Natural killer cell (primary cell): ENCODE measurements at regions of chr11 and their contacts with region 1.

Region 1: DNA sequence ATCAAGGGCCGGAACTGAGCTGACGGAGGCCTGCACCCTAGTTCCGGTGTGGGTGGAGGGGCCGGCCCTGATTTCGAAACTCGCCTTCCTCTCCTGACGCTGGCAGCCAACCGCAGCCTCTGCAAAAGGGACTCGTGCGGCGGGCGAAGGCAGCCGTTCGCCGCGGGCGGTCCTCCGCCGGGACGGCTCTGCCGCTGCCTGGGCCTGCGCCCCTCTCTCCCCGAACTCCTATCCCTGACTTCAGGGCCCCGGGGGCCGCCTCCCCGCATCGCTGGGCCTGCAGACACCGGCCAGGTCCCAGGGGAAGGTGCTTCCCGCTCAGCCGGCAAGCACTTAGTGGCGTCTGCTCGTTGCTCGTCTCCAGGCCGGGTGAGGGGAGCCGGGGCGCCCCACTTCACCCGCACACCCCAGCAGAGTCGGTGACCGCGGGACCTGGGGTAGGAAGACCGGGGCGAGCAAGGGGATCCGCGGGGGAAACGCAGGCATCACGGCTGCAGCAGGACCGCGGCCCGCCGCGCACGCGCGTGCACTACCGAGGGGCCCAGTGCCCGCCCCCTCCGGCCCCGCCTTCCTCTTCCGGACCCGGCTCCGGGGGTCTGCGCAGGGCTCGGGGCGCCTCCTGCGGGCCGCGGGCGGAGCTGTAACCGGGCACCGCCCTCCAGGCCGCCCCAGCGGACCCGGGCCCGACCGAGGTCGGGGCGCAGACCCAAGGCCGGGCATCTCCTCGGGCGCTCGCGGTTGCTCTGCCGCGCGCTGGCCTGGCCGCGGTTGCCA is 464 bp upstream of the ANKRD13D start:
- DNase-seq: peak; percentile 91 to 94
- ATAC-seq: peak; percentile 68 to 87 (median 73)
- H3K4me3 ChIP-seq: peak overlapping the region; percentile 95
- H3K4me3 Mint-ChIP-seq: peak overlapping the region; percentile 89
- H3K27ac ChIP-seq: peak overlapping the region; percentile 97
- H3K27ac Mint-ChIP-seq: peak overlapping the region; percentile 100
- H3K4me1 ChIP-seq: peaks cover 78% of the 10 kb centered on the region
- H3K4me1 Mint-ChIP-seq: peaks cover 46 to 60% of the 10 kb centered on the region in 2 donors
- H3K27me3 ChIP-seq: no peaks in the 10 kb centered on the region
- H3K27me3 Mint-ChIP-seq: no peaks in the 10 kb centered on the region
- CTCF ChIP-seq: peak; percentile 10

Region 2: GRCh38 chr11:67033661-67034166 is 254.9 kb before region 1 on chr11:
- intact Hi-C with region 1: no loop called
- DNase-seq: no peak
- ATAC-seq: no peak
- H3K4me3 ChIP-seq: no peak overlapping the region
- H3K4me3 Mint-ChIP-seq: no peak overlapping the region
- H3K27ac ChIP-seq: no peak overlapping the region
- H3K27ac Mint-ChIP-seq: no peak overlapping the region
- H3K4me1 ChIP-seq: no peaks in the 10 kb centered on the region
- H3K4me1 Mint-ChIP-seq: no peaks in the 10 kb centered on the region
- H3K27me3 ChIP-seq: no peaks in the 10 kb centered on the region
- H3K27me3 Mint-ChIP-seq: peaks cover 8 to 19% of the 10 kb centered on the region in 2 donors
- CTCF ChIP-seq: no peak

Region 3: GRCh38 chr11:67071420-67072284 is 217.0 kb before region 1 on chr11:
- intact Hi-C with region 1: no loop called
- DNase-seq: peak; percentile 68 to 82
- ATAC-seq: peak; percentile 90 to 99 (median 98)
- H3K4me3 ChIP-seq: peak overlapping the region; percentile 5
- H3K4me3 Mint-ChIP-seq: peak overlapping the region; percentile 74
- H3K27ac ChIP-seq: no peak overlapping the region
- H3K27ac Mint-ChIP-seq: no peak overlapping the region
- H3K4me1 ChIP-seq: peaks cover 9% of the 10 kb centered on the region
- H3K4me1 Mint-ChIP-seq: peaks cover 0 to 7% of the 10 kb centered on the region in 2 donors
- H3K27me3 ChIP-seq: peaks cover 3% of the 10 kb centered on the region
- H3K27me3 Mint-ChIP-seq: peaks cover 0 to 2% of the 10 kb centered on the region in 2 donors
- CTCF ChIP-seq: peak; percentile 87

Region 4: DNA sequence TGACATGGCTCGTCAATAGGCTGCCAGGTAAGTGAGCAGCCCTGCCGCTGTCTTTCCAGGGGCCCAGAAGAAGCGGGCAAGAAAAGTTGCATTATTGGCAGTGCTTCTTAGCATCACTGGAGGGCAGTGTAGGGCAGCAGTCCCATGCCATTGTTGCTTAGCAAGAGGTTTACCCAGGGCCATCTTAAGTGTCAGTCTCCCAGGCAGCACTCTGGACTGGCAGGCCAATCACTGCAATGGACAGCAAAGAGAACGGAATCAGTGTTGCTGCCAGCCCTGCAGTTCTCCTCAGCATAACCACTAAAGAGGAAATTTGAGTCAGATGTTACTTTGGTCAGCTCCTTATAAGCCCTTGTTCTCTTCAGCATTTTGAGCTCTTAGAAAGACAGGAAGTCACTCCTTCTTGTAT is 35.8 kb before region 1 on chr11:
- intact Hi-C with region 1: loop called (anchors 5 kb)
- DNase-seq: peak in 1 of 2 donors; percentile 70
- ATAC-seq: peak; percentile 78 to 86 (median 79)
- H3K4me3 ChIP-seq: no peak overlapping the region
- H3K4me3 Mint-ChIP-seq: peak overlapping the region; percentile 57
- H3K27ac ChIP-seq: peak overlapping the region; percentile 7
- H3K27ac Mint-ChIP-seq: peak overlapping the region; percentile 78 to 89
- H3K4me1 ChIP-seq: peaks cover 18% of the 10 kb centered on the region
- H3K4me1 Mint-ChIP-seq: peaks cover 36 to 41% of the 10 kb centered on the region in 2 donors
- H3K27me3 ChIP-seq: no peaks in the 10 kb centered on the region
- H3K27me3 Mint-ChIP-seq: no peaks in the 10 kb centered on the region
- CTCF ChIP-seq: peak; percentile 53

Region 5: DNA sequence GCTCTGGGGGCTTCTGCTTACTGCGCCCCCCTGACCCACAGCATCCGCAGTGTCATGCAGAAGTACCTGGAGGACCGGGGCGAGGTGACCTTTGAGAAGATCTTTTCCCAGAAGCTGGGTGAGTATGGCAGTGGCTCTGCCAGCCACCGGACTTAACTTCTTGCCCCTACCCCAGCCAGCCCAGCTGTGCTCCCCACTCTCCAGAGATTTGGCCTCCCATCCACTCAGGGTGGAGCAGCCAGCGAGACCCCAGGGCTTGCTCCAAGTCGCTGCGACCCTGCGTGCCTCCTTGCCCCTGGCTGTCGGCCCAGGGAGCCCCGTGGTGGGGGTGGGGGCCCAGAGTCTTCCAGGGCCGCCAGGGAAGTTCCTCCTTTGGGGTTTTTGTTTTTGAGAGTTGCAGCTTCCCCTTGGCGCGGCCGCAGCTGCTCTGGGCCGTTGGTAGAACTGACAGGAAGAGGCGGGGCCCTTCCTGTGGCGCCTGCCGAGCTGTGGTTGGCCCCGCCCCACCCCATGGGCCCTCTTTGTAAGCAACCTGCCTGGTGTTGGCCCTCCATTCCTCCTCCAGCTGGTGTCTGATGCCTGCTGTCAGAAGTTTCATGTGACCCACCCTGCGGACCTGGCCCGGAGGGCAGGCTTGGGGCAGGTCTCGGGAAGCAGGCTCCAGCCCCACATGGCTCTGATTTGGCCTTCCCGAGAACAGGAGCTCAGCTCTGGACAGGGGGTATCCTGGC is 11.2 kb before region 1 on chr11:
- intact Hi-C with region 1: loop called (anchors 1 kb)
- DNase-seq: peak; percentile 84 to 97
- ATAC-seq: peak; percentile 90 to 95 (median 91)
- H3K4me3 ChIP-seq: peak overlapping the region; percentile 37
- H3K4me3 Mint-ChIP-seq: peak overlapping the region; percentile 80
- H3K27ac ChIP-seq: peak overlapping the region; percentile 95
- H3K27ac Mint-ChIP-seq: peak overlapping the region; percentile 96 to 97
- H3K4me1 ChIP-seq: peaks cover 100% of the 10 kb centered on the region
- H3K4me1 Mint-ChIP-seq: peaks cover 58 to 65% of the 10 kb centered on the region in 2 donors
- H3K27me3 ChIP-seq: no peaks in the 10 kb centered on the region
- H3K27me3 Mint-ChIP-seq: no peaks in the 10 kb centered on the region
- CTCF ChIP-seq: no peak

Region 6: GRCh38 chr11:67303132-67303834 is 14.6 kb after region 1 on chr11 and contains the start of gene SSH3:
- intact Hi-C with region 1: loop called (anchors 2 kb)
- DNase-seq: peak; percentile 52 to 60
- ATAC-seq: peak; percentile 81 to 87 (median 86)
- H3K4me3 ChIP-seq: peak within 1 kb of the TSS; percentile 50
- H3K4me3 Mint-ChIP-seq: peak within 1 kb of the TSS; percentile 79
- H3K27ac ChIP-seq: peak within 1 kb of the TSS; percentile 43
- H3K27ac Mint-ChIP-seq: peak within 1 kb of the TSS; percentile 54 to 82
- H3K4me1 ChIP-seq: peaks cover 25% of the 10 kb centered on the region
- H3K4me1 Mint-ChIP-seq: peaks cover 11 to 23% of the 10 kb centered on the region in 2 donors
- H3K27me3 ChIP-seq: no peaks in the 10 kb centered on the region
- H3K27me3 Mint-ChIP-seq: no peaks in the 10 kb centered on the region
- CTCF ChIP-seq: no peak
- total RNA-seq, gene SSH3: 34.3 to 42.7 (median 38.1) TPM

Region 7: DNA sequence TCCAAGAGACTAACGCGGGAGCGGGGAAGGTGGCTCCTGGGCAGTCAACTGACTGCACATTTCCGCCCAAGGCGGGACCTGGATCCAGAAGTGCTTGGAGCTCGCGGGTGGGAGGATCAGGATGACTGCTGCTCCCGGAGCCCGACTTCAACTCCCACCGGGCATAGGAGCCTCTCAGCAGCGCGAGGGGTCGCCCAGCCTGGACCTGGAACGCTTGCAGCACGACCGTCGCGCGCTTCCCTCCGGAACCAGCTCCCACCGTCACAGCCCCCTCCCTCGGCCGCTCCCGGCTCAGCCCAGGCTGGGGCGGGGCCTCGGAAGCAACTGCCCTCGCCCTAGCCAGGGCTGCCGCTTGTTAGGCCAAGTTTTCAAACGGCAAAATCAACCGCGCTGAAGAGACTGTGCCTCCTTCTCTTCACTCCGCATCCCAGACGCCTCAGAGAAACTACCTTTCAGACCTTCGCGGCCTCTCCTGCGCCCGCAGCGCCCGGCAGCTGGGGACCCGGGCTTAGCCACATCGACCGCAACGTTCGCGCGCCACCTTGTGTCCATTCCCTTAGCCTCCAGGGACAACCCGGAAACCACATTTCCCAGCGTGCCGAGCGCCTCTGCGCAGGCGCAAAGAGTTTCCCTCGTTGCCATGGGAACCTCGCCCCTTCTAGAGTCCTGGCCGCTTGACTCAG is 28.7 kb after region 1 on chr11:
- intact Hi-C with region 1: loop called (anchors 2 kb)
- DNase-seq: peak; percentile 98 to 99
- ATAC-seq: peak; percentile 88 to 94 (median 90)
- H3K4me3 ChIP-seq: peak overlapping the region; percentile 61
- H3K4me3 Mint-ChIP-seq: peak overlapping the region; percentile 100
- H3K27ac ChIP-seq: peak overlapping the region; percentile 68
- H3K27ac Mint-ChIP-seq: peak overlapping the region; percentile 94 to 97
- H3K4me1 ChIP-seq: peaks cover 32% of the 10 kb centered on the region
- H3K4me1 Mint-ChIP-seq: peaks cover 25 to 33% of the 10 kb centered on the region in 2 donors
- H3K27me3 ChIP-seq: no peaks in the 10 kb centered on the region
- H3K27me3 Mint-ChIP-seq: peaks cover 0 to 11% of the 10 kb centered on the region in 2 donors
- CTCF ChIP-seq: peak; percentile 78

Region 8: DNA sequence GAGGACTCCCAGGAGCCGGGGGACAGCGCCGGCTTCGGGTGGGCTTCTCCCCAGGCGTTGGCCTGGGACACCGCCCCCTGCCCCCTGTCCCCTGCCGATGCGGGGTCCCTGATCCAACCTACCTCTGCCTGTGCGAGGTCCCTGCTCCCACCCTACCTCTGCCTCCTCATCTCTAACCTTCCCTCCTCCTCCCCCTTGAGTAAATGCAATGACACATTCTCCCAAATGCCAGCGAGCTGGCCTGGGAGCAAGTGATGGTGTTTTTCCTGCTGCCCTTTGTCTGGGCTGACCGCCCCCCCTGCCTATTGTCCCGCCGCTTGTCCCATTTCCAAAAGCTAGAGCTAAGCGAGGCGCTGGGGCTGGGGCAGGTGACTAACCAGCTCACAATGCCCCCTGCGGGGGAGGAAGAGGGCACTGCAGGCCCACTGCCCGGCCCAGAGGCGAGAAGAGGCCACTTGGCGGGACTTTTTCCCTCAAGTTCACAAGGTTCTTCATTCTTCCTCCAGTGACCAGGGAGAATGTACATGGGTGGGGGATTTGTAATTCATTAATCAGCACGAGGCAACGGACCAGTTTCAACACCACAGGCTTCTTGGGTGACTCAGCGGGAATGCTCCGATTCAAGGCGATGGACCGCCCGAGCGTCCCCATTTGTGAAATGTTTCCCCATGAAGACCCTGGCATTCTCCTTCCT is 85.4 kb after region 1 on chr11:
- intact Hi-C with region 1: loop called (anchors 5 kb)
- DNase-seq: peak; percentile 61 to 73
- ATAC-seq: peak; percentile 45 to 60 (median 51)
- H3K4me3 ChIP-seq: peak overlapping the region; percentile 29
- H3K4me3 Mint-ChIP-seq: peak overlapping the region; percentile 77
- H3K27ac ChIP-seq: peak overlapping the region; percentile 43
- H3K27ac Mint-ChIP-seq: peak overlapping the region; percentile 88 to 89
- H3K4me1 ChIP-seq: peaks cover 48% of the 10 kb centered on the region
- H3K4me1 Mint-ChIP-seq: peaks cover 35 to 45% of the 10 kb centered on the region in 2 donors
- H3K27me3 ChIP-seq: peaks cover 3% of the 10 kb centered on the region
- H3K27me3 Mint-ChIP-seq: no peaks in the 10 kb centered on the region
- CTCF ChIP-seq: peak; percentile 35

Region 9: DNA sequence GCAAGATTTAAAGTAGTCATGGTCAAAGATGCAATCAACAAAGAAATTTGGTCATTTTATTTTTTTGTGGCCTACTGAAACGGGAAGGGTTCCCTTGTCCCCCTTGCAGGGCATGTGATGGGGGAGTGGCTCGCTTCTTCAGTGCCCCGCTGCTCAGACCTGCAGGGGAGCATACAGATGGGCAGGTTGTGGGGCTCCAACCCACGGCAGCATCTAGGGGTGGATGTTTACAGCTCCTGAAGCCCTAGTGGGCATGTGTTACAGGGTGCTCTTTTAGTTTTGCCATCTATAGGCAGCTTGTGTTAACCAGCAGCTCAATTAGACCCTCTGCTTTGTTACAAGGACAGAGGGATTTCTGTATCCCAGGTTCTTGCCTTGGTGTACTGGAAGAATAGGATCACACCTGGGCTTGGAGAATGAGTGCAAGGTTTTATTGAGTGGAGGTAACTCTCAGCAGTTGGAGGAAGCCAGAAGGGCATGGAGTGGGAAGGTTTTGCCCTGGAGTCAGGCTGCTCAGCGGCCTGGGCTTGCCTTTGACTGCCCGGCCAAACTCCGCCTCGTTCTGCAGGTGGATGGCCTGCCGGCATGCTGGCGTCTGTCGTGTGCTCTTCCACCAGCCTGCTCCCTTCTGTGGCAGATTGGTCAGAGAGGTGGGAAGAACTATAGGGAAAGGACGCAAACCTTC is 304.4 kb after region 1 on chr11:
- intact Hi-C with region 1: no loop called
- DNase-seq: no peak
- ATAC-seq: no peak
- H3K4me3 ChIP-seq: no peak overlapping the region
- H3K4me3 Mint-ChIP-seq: no peak overlapping the region
- H3K27ac ChIP-seq: no peak overlapping the region
- H3K27ac Mint-ChIP-seq: no peak overlapping the region
- H3K4me1 ChIP-seq: peaks cover 5% of the 10 kb centered on the region
- H3K4me1 Mint-ChIP-seq: peaks cover 0 to 5% of the 10 kb centered on the region in 2 donors
- H3K27me3 ChIP-seq: no peaks in the 10 kb centered on the region
- H3K27me3 Mint-ChIP-seq: no peaks in the 10 kb centered on the region
- CTCF ChIP-seq: no peak